ENCODE measurements at regions of chr19 and their contacts with region 1.

Region 1: DNA sequence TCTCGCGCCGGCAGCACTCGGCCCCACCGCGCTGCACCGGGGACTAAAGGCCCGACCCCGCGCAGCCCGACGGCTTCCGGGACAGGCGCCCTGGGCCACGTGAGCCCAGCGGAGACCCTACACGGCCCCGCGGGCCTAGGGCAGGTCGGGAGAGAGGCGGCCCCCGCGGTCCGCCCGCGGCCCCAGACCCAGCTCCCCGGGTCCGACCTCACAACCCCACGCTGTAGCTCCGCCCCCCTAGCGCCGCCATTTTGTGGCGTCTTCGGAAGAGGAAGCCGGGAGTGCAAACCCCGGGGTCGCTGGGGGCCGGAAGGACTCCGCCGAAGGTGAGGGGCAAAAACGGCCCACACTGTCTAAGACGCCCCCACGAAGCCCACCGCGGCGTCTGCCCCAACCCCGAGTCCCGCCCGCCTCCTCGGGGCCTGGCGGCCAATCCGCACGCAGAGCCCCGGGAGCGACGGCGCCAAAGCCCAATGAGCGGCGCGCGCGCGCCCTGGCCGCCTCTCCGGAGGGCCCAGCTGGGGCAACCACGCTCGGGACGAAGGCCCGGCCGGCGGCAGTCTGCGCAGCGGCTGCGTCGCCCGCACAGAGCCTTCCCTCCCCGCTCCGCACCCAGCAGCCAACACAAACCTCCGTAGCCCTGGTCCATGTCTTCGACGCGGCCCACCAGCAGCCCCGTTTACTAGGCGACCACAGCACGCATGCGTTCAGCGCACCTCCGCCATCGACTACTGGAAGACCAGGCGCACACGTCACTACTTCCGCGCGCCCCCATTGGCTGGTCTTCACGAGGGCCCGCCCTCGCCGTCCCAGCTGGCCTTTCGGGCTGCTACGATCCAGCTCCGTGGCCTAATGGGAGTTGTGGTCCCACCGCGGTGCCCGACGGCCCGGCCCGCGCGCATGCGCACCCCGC is at the start of gene AKAP8:
- DNase-seq: peak; percentile 94 to 100 (median 98)
- ATAC-seq: peak; percentile 91 to 93 (median 91)
- H3K4me3 ChIP-seq: peak within 1 kb of the TSS; percentile 90 to 99
- H3K4me3 Mint-ChIP-seq: peak within 1 kb of the TSS; percentile 91 to 98 (median 97)
- H3K27ac ChIP-seq: peak within 1 kb of the TSS; percentile 96
- H3K27ac Mint-ChIP-seq: peak within 1 kb of the TSS; percentile 98 to 99
- H3K4me1 ChIP-seq: peaks cover 7 to 41% of the 10 kb centered on the region in 2 experiments
- H3K4me1 Mint-ChIP-seq: peaks cover 31 to 48% (median 46%) of the 10 kb centered on the region in 3 donors
- H3K27me3 ChIP-seq: no peaks in the 10 kb centered on the region
- H3K27me3 Mint-ChIP-seq: no peaks in the 10 kb centered on the region
- total RNA-seq, gene AKAP8: 75.8 to 90.3 (median 86.7) TPM

Region 2: GRCh38 chr19:14006243-14006765 is 1373.0 kb before region 1 on chr19 and contains the start of gene RFX1:
- CTCF ChIA-PET with region 1: no interaction called
- POLR2A ChIA-PET with region 1: no interaction called
- DNase-seq: peak; percentile 99 to 100 (median 100)
- ATAC-seq: peak; percentile 77 to 82 (median 80)
- H3K4me3 ChIP-seq: peak within 1 kb of the TSS; percentile 86 to 88
- H3K4me3 Mint-ChIP-seq: peak within 1 kb of the TSS; percentile 82 to 92 (median 91)
- H3K27ac ChIP-seq: peak within 1 kb of the TSS; percentile 100
- H3K27ac Mint-ChIP-seq: peak within 1 kb of the TSS; percentile 97 to 98
- H3K4me1 ChIP-seq: peaks cover 16 to 50% of the 10 kb centered on the region in 2 experiments
- H3K4me1 Mint-ChIP-seq: peaks cover 38 to 54% (median 47%) of the 10 kb centered on the region in 3 donors
- H3K27me3 ChIP-seq: no peaks in the 10 kb centered on the region
- H3K27me3 Mint-ChIP-seq: no peaks in the 10 kb centered on the region
- total RNA-seq, gene RFX1: 18.4 to 27.1 (median 23.1) TPM

Region 3: DNA sequence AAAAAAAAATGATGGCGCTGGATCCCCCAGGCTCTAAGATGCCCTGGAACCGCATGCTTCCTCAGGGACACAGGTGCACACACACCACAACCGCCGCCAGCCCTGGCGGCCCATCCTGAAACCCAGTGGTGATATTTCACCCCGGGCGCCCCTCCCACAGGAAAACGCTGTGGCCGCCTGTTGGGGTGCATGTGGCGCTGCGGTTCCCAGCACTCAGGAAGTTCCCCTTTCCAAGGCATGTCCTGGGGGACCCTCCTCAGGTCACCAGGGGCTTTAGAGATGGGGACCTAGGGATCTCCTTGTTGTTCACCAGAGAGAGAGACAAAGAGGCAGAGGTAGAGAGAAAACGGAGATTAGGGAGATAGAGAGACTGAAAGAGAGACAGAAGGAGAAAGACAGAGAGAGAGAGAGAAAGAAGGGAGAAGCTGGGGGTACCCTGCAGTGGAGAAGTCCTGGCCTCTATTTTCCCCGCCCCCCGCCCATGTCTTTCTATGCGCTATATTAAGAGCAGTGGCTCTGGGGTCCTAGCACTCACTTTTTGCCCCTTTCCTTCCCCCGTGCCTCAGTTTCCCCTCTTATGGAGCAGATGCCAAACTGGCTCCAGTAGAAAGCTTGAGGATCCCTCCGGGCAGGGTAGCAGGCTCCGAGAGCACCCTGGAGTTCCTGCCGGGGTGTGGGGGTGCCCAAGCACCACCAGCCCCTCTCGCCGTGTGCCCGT is 603.3 kb before region 1 on chr19:
- CTCF ChIA-PET with region 1: no interaction called
- POLR2A ChIA-PET with region 1: no interaction called
- DNase-seq: peak in 3 of 35 experiments; percentile 3 to 14 (median 9)
- ATAC-seq: peak in 1 of 4 experiments; percentile 44
- H3K4me3 ChIP-seq: peak overlapping the region; percentile 36 to 77
- H3K4me3 Mint-ChIP-seq: peak overlapping the region; percentile 52 to 71 (median 55)
- H3K27ac ChIP-seq: no peak overlapping the region
- H3K27ac Mint-ChIP-seq: peak overlapping the region in 1 of 2 donors; percentile 3
- H3K4me1 ChIP-seq: peaks cover 3 to 21% of the 10 kb centered on the region in 2 experiments
- H3K4me1 Mint-ChIP-seq: peaks cover 11 to 18% (median 17%) of the 10 kb centered on the region in 3 donors
- H3K27me3 ChIP-seq: peaks cover 0 to 55% of the 10 kb centered on the region in 2 experiments
- H3K27me3 Mint-ChIP-seq: peaks cover 23 to 57% of the 10 kb centered on the region in 2 donors

Region 4: GRCh38 chr19:15393963-15394362 is 14.6 kb after region 1 on chr19:
- CTCF ChIA-PET with region 1: no interaction called
- POLR2A ChIA-PET with region 1: interaction called, 5 to 10 read pairs
- DNase-seq: no peak
- ATAC-seq: no peak
- H3K4me3 ChIP-seq: no peak overlapping the region
- H3K4me3 Mint-ChIP-seq: no peak overlapping the region
- H3K27ac ChIP-seq: no peak overlapping the region
- H3K27ac Mint-ChIP-seq: no peak overlapping the region
- H3K4me1 ChIP-seq: no peaks in the 10 kb centered on the region
- H3K4me1 Mint-ChIP-seq: peaks cover 11% of the 10 kb centered on the region in 3 donors
- H3K27me3 ChIP-seq: no peaks in the 10 kb centered on the region
- H3K27me3 Mint-ChIP-seq: no peaks in the 10 kb centered on the region

Region 5: GRCh38 chr19:15555759-15556633 is 176.7 kb after region 1 on chr19:
- CTCF ChIA-PET with region 1: interaction called, 3 to 13 read pairs
- POLR2A ChIA-PET with region 1: interaction called in 1 of 2 experiments, 3 read pairs
- DNase-seq: peak; percentile 87 to 99 (median 94)
- ATAC-seq: peak; percentile 81 to 89 (median 86)
- H3K4me3 ChIP-seq: peak overlapping the region; percentile 52 to 82
- H3K4me3 Mint-ChIP-seq: peak overlapping the region; percentile 66 to 81 (median 75)
- H3K27ac ChIP-seq: peak overlapping the region; percentile 65
- H3K27ac Mint-ChIP-seq: peak overlapping the region; percentile 88 to 89
- H3K4me1 ChIP-seq: peaks cover 7 to 33% of the 10 kb centered on the region in 2 experiments
- H3K4me1 Mint-ChIP-seq: peaks cover 23 to 30% (median 28%) of the 10 kb centered on the region in 3 donors
- H3K27me3 ChIP-seq: peaks cover 0 to 14% of the 10 kb centered on the region in 2 experiments
- H3K27me3 Mint-ChIP-seq: no peaks in the 10 kb centered on the region

Measured in T-cell (primary cell).